Heart right ventricle (tissue), 16 donors: ENCODE measurements at regions of chr15 and their contacts with region 1.

Region 1: GRCh38 chr15:23773093-23773492 is 86.0 kb upstream of the NDN start:
- DNase-seq: no peak
- ATAC-seq: no peak
- H3K4me3 ChIP-seq: no peak overlapping the region
- H3K27ac ChIP-seq: no peak overlapping the region
- H3K4me1 ChIP-seq: no peaks in the 10 kb centered on the region
- H3K27me3 ChIP-seq: no peaks in the 10 kb centered on the region
- CTCF ChIP-seq: no peak

Region 2: DNA sequence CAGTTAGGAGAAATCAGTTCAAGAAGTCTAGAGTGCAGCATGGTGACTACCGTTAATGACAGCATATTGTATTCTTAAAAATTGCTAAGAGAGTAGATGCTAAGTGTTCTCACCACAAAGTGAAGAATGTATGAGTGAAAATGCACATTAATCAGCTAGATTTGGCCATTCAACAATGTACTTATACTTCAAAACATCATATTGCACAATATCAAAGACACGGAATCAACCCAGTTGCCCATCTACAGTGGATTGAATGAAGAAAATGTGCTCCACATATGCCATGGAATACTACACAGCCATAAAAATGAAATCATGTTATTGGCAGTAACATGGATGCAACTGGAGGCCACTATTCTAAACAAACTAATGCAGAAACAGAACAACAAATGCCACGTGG is 33.9 kb after region 1 on chr15:
- intact Hi-C with region 1: loop called in 1 of 10 experiments (anchors 5 kb)
- DNase-seq: no peak
- ATAC-seq: no peak
- H3K4me3 ChIP-seq: no peak overlapping the region
- H3K27ac ChIP-seq: no peak overlapping the region
- H3K4me1 ChIP-seq: no peaks in the 10 kb centered on the region
- H3K27me3 ChIP-seq: no peaks in the 10 kb centered on the region
- CTCF ChIP-seq: no peak

Region 3: DNA sequence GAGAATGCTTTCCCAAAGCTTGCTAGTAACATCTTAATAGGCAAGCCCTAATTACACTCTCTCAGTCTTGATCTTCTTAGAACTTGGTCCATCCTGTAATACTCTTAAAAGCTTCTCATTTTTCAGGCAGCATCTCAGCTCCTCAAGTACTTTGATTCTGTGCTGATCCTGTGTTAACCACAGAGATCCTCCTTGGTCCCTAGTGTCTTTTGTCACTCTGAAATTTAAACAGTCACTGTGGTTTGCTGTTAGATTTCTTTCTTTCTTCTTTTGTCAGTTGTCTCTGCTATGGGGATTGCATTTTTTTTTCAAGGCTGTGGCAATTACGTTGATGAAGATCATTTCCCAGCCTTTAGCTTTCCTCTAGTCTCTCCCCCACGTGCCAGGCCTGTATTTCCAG is 1691.7 kb after region 1 on chr15:
- intact Hi-C with region 1: loop called in 1 of 10 experiments (anchors 5 kb)
- DNase-seq: no peak
- ATAC-seq: no peak
- H3K4me3 ChIP-seq: no peak overlapping the region
- H3K27ac ChIP-seq: no peak overlapping the region
- H3K4me1 ChIP-seq: peaks cover 0 to 24% (median 4%) of the 10 kb centered on the region in 9 donors
- H3K27me3 ChIP-seq: no peaks in the 10 kb centered on the region
- CTCF ChIP-seq: no peak